Stomach (tissue), 19 donors: ENCODE measurements at regions of chr16 and their contacts with region 1.

Region 1: GRCh38 chr16:28910086-28911031 is 14.7 kb downstream of the RABEP2 start:
- DNase-seq: peak in 1 of 2 donors; percentile 58
- H3K4me3 ChIP-seq: no peak overlapping the region
- H3K27ac ChIP-seq: no peak overlapping the region
- H3K4me1 ChIP-seq: no peaks in the 10 kb centered on the region
- H3K27me3 ChIP-seq: no peaks in the 10 kb centered on the region
- CTCF ChIP-seq: no peak
- EP300 ChIP-seq: no peak
- POLR2A ChIP-seq: no peak

Region 2: GRCh38 chr16:28863929-28864793 is 46.2 kb before region 1 on chr16:
- intact Hi-C with region 1: loop called (anchors 10 kb)
- DNase-seq: peak in 1 of 2 donors; percentile 63
- H3K4me3 ChIP-seq: peak overlapping the region; percentile 80 to 86 (median 85)
- H3K27ac ChIP-seq: peak overlapping the region; percentile 92 to 95 (median 93)
- H3K4me1 ChIP-seq: peaks cover 20 to 38% (median 31%) of the 10 kb centered on the region in 4 donors
- H3K27me3 ChIP-seq: no peaks in the 10 kb centered on the region
- CTCF ChIP-seq: no peak
- EP300 ChIP-seq: no peak
- POLR2A ChIP-seq: no peak